Thyroid gland (tissue), 4 donors: ENCODE measurements at regions of chr2 and their contacts with region 1.

Region 1: DNA sequence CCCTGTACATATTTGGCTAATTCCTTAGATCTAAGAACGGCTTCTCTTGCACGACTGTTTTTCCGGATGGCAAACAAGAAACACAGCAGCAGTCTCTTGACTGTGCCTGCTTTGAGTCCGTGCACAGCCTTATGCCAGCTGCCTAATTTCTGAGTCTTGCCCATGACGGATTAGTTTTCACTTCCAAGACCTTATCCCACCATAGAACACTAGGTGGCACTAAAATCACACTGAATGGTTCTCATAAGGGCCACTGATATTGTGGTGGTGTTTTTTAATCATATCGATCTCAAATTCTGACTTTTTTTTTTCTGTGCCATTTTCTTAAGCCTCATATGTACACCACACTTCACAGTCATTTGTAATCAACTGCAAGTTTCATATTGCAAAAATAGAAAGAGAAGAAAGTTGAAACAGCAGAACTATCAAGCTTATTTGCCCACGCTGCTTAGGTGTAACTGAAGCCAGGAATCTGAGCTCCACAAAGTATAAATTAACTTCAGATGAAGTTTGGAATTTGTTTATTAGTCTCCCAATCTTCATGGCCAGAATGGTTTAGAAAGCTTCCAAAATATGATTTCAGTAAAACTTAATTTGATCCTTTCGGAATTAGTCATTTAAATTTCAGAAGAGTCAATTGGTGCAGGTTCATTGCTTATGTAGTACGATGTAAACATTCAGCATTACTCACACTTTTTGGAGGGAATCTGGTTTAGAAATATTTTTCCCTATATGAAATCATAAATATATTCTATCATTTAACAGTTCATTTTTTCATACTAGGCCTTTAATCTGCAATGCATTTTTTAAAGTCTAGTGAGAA is 45.5 kb upstream of the SCN7A start:
- DNase-seq: peak in 1 of 2 donors; percentile 2
- H3K4me3 ChIP-seq: no peak overlapping the region
- H3K27ac ChIP-seq: no peak overlapping the region
- H3K4me1 ChIP-seq: no peaks in the 10 kb centered on the region
- H3K27me3 ChIP-seq: no peaks in the 10 kb centered on the region
- CTCF ChIP-seq: peak; percentile 33 to 77 (median 58)
- POLR2A ChIP-seq: no peak

Region 2: DNA sequence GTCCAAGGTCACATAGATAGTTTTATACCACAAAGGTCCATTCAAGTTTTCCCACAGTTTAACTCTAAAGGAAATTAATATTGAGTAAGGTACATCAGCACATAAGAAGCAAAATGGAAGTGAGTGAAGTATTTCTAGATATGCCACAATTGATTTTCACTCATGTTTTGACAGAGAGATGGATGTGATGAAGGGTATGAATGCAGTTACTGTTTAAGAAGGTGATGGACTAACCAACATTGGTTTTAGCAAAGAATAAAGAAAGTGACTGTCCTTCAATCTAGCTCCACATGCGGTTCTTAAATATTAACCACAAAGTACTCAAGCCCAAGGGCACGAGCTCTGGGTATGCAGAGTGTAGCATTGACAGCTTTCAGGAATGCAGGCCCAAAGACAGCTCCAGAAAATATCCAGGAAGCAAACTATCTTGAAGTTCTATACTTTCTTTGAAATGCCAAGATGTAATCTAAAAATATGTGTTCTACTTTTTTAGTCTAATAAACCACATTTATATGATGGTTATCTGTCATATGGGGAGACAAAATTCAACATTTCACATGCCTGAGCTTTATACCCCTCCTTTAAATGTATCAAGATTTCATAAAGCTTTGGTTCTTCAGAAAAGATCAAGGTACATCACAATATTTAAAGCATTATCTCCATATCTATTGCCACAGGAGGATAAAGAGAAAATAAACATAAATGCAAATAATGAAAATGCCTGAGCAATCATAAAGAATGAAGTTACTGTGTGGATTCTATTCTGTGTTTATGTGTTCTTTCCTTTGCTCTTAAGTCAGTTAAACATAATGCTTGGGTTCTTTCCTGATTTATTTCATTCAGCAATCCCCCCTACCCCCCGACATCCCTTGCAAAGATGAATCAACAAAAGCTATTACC is 405.0 kb before region 1 on chr2:
- intact Hi-C with region 1: no loop called
- DNase-seq: no peak
- H3K4me3 ChIP-seq: no peak overlapping the region
- H3K27ac ChIP-seq: no peak overlapping the region
- H3K4me1 ChIP-seq: no peaks in the 10 kb centered on the region
- H3K27me3 ChIP-seq: no peaks in the 10 kb centered on the region
- CTCF ChIP-seq: no peak
- POLR2A ChIP-seq: no peak

Region 3: GRCh38 chr2:166278856-166279255 is 260.7 kb before region 1 on chr2:
- intact Hi-C with region 1: no loop called
- DNase-seq: no peak
- H3K4me3 ChIP-seq: no peak overlapping the region
- H3K27ac ChIP-seq: no peak overlapping the region
- H3K4me1 ChIP-seq: no peaks in the 10 kb centered on the region
- H3K27me3 ChIP-seq: no peaks in the 10 kb centered on the region
- CTCF ChIP-seq: no peak
- POLR2A ChIP-seq: no peak

Region 4: DNA sequence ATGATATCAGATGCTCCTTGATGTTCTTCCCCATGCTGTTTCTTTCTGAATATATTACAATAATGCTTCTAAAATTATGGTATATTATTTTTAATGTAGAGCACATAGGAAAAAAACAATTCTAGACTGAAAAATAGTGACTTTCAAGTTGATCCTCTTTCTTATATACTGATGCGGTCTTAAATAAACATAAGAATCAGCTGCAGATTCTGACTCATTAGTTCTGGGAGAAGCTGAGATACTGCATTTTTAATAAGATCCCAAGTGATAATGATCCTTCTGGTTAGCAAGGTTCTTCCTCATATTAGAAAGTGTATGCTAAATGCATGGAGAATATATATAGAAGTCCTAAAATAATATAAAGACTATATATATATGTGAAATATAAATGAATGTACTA is 473.7 kb after region 1 on chr2:
- intact Hi-C with region 1: no loop called
- DNase-seq: no peak
- H3K4me3 ChIP-seq: no peak overlapping the region
- H3K27ac ChIP-seq: no peak overlapping the region
- H3K4me1 ChIP-seq: no peaks in the 10 kb centered on the region
- H3K27me3 ChIP-seq: no peaks in the 10 kb centered on the region
- CTCF ChIP-seq: no peak
- POLR2A ChIP-seq: no peak

Region 5: GRCh38 chr2:168118733-168119514 is 1579.4 kb after region 1 on chr2:
- intact Hi-C with region 1: loop called (anchors 10 kb)
- DNase-seq: no peak
- H3K4me3 ChIP-seq: no peak overlapping the region
- H3K27ac ChIP-seq: no peak overlapping the region
- H3K4me1 ChIP-seq: no peaks in the 10 kb centered on the region
- H3K27me3 ChIP-seq: no peaks in the 10 kb centered on the region
- CTCF ChIP-seq: peak; percentile 19 to 69 (median 46)
- POLR2A ChIP-seq: no peak